ENCODE measurements at regions of chr3 and their contacts with region 1.

Region 1: DNA sequence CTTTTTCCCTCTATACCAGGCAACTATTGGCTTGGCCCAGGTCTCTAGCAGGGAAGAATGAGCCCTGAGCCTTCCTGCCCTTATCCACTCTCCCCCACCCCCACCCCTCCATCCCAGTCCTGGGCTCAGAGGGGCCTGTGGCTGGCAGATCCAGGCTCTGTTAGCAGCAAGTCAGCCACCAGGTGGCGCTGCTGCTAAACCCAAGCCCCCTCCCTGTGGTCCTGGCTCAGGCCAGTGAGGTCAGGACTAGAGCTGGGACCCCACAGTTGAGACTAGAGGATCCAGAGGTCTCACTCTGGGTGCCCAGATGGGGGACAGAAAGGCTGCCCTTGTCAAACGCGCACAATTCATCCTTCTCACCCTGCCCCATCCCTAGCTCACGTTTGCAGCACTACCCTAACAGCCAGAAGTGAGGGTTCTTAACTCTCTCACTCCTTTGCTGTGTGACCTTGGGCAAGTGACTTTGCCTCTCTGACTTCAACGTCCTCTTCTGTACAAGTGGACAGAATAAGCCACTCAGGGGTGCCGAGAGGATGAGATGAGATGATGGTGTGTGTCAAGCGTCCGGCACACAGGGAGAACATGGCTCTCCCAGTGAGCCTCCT is 46.8 kb upstream of the SLC6A1 start:
- DNase-seq: peak; percentile 92
- H3K4me3 ChIP-seq: peak overlapping the region in 1 of 2 experiments; percentile 42; a peak in 1 of 4 replicates
- H3K27ac ChIP-seq: no peak overlapping the region
- H3K4me1 ChIP-seq: peaks cover 0 to 2% of the 10 kb centered on the region in 2 experiments; a peak in 1 of 4 replicates
- H3K27me3 ChIP-seq: no peaks in the 10 kb centered on the region
- CTCF ChIP-seq: peak; percentile 80
- EP300 ChIP-seq: no peak
- RAD21 ChIP-seq: peak; percentile 76

Region 2: GRCh38 chr3:10764259-10765051 is 181.3 kb before region 1 on chr3:
- CTCF ChIA-PET with region 1: interaction called, 20 read pairs
- POLR2A ChIA-PET with region 1: no interaction called
- DNase-seq: no peak
- H3K4me3 ChIP-seq: no peak overlapping the region
- H3K27ac ChIP-seq: no peak overlapping the region
- H3K4me1 ChIP-seq: no peaks in the 10 kb centered on the region
- H3K27me3 ChIP-seq: no peaks in the 10 kb centered on the region
- CTCF ChIP-seq: no peak
- EP300 ChIP-seq: no peak
- RAD21 ChIP-seq: no peak

Region 3: DNA sequence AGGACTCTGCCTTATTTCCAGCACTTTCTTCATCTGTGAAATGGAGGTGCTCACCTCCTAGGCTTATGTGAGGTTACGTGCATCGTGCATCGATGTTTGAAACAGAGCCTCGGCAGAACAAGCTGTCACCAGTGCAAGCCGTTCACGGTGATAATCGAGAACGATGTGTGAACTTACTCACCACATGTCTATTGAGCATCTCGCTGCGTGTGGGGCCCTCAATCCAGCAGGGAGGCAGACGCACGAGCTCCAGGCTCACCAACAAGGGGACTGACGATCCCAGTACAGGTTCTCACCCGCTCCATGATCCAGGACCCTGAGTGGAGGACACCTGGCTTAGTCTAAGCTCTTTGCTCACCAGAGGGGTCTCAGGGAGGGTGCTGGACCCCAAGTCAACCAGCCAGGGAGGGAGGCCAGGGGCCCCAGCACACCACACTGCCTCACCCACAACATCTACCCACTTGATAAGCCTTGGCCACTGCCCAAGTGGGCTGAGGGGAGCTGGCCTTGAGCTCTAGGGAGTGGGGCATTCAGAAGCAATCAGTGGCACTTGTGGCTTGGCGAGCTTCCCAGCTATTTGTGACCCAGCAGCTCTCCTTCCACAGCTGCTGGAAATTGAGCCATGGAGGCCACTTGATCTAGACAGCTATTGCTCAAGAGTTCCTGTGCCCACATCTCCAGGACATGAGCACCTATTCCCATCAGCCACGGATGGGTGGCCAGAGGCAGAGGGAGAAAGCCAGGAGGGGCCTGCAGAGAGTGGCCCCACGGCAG is 12.4 kb after region 1 on chr3:
- CTCF ChIA-PET with region 1: interaction called, 83 read pairs
- POLR2A ChIA-PET with region 1: no interaction called
- DNase-seq: no peak
- H3K4me3 ChIP-seq: no peak overlapping the region
- H3K27ac ChIP-seq: no peak overlapping the region
- H3K4me1 ChIP-seq: no peaks in the 10 kb centered on the region; a peak in 1 of 4 replicates
- H3K27me3 ChIP-seq: no peaks in the 10 kb centered on the region; the same call in 1 of the 2 replicates
- CTCF ChIP-seq: no peak
- EP300 ChIP-seq: no peak
- RAD21 ChIP-seq: no peak

Region 4: GRCh38 chr3:10983219-10983916 is 37.6 kb after region 1 on chr3:
- CTCF ChIA-PET with region 1: interaction called, 102 read pairs
- POLR2A ChIA-PET with region 1: no interaction called
- DNase-seq: peak; percentile 78
- H3K4me3 ChIP-seq: no peak overlapping the region
- H3K27ac ChIP-seq: no peak overlapping the region
- H3K4me1 ChIP-seq: no peaks in the 10 kb centered on the region
- H3K27me3 ChIP-seq: no peaks in the 10 kb centered on the region
- CTCF ChIP-seq: peak; percentile 80
- EP300 ChIP-seq: no peak
- RAD21 ChIP-seq: peak; percentile 62

Region 5: DNA sequence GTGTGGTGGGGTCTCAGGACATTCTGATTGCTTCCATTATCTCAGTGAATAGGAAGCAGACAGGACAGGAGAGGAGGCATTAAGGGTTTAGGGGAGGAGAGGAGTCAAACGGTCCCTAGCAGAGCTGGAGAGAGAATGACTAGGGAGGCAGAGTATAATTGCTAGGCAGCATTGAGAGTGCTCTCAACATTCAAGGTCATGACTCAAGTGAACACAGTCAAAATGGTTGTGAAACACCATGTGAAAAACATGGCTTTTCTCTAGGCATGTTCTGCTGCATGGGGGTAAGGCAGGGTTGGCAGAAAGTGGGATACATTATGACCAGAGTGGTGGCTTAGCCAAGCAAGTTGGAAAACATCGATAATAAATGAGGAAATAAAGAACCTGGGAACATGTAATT is 189.0 kb after region 1 on chr3:
- CTCF ChIA-PET with region 1: no interaction called
- POLR2A ChIA-PET with region 1: no interaction called
- DNase-seq: no peak
- H3K4me3 ChIP-seq: no peak overlapping the region
- H3K27ac ChIP-seq: no peak overlapping the region
- H3K4me1 ChIP-seq: peaks cover 0 to 7% of the 10 kb centered on the region in 2 experiments; a peak in 3 of 4 replicates
- H3K27me3 ChIP-seq: no peaks in the 10 kb centered on the region
- CTCF ChIP-seq: no peak
- EP300 ChIP-seq: no peak
- RAD21 ChIP-seq: no peak